Breast epithelium (tissue), 4 donors: ENCODE measurements at regions of chr11 and their contacts with region 1.

Region 1: DNA sequence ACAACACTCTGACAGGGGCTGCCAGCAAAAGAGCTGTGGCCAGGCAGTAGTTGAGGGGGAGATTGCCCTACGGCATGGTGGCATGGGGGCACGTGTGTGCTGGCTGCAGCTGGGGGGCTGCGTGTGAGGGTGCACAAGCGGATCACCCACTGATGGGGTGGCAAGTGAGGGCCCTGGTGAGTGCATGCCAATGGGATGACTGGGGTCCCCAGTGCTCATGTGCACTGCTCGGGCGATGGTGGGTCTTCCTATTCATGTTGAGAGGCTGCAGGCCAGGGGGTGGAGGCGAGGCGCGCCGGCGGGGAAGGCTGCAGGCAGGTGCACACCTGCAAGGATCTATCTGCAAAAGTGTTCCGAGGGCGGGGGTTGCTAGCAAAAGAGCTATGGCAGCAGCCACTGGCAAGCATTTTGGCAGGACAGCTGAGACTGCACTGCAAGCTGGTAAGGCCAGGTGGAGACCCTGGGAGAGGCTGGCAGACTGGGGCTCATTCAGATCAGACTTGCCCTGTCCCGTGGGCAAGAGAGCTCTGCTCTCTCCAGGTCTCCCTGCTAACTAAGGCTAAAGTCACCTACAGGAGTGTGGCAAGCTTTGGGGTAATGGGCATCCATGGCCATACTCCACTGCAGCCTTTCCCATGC is 12.0 kb downstream of the OR51I2 start:
- DNase-seq: no peak
- H3K4me3 ChIP-seq: no peak overlapping the region
- H3K27ac ChIP-seq: no peak overlapping the region
- H3K4me1 ChIP-seq: no peaks in the 10 kb centered on the region
- H3K27me3 ChIP-seq: no peaks in the 10 kb centered on the region
- CTCF ChIP-seq: no peak
- POLR2A ChIP-seq: no peak

Region 2: DNA sequence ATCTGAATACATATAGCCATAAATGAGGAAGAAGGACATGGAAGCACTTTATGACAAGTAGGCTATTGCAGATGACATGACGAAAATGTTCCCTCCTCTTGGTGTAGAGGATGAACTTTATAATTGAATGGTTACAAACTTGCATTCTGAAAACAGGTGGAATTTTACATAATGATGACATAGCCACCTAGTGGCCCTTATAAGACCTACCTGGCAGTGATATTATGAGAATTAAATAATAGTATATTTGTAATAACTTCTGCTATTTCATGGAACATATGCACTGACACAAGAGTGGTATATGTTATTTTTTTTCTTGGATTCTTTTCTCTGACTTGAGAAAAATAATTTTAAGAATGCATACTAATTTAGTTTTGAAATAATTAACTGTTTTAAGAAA is 251.4 kb after region 1 on chr11:
- intact Hi-C with region 1: loop called (anchors 5 kb)
- DNase-seq: no peak
- H3K4me3 ChIP-seq: no peak overlapping the region
- H3K27ac ChIP-seq: no peak overlapping the region
- H3K4me1 ChIP-seq: no peaks in the 10 kb centered on the region
- H3K27me3 ChIP-seq: no peaks in the 10 kb centered on the region
- CTCF ChIP-seq: peak in 2 of 3 donors; percentile 40 to 45
- POLR2A ChIP-seq: no peak

Region 3: GRCh38 chr11:5722627-5723026 is 261.5 kb after region 1 on chr11:
- intact Hi-C with region 1: no loop called
- DNase-seq: no peak
- H3K4me3 ChIP-seq: no peak overlapping the region
- H3K27ac ChIP-seq: no peak overlapping the region
- H3K4me1 ChIP-seq: no peaks in the 10 kb centered on the region
- H3K27me3 ChIP-seq: no peaks in the 10 kb centered on the region
- CTCF ChIP-seq: no peak
- POLR2A ChIP-seq: no peak